OCI-LY7 (cell line): ENCODE measurements at regions of chr21 and their contacts with region 1.

Region 1: DNA sequence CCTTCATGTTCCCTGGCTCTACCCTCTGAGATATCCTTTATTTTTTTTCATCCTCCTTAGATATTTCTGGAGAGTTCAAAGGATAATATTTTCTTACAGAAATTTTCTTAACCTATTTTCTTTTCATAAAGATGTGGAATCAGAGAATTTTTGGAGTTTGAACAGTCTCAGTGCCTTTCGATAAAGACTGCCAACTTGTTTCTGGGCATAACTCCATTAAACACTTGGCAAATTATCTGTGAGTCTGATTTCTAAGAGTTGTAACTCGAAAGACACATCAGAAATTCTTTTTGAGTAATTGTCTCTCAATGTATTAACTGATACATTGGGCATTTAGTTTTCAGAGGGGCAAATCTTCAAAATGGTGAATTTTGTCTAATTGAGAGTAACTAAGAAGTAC is 1255.6 kb downstream of the NCAM2 start:
- DNase-seq: no peak
- H3K4me3 ChIP-seq: no peak overlapping the region
- H3K27ac ChIP-seq: no peak overlapping the region
- H3K4me1 ChIP-seq: no peaks in the 10 kb centered on the region
- CTCF ChIP-seq: no peak

Region 2: DNA sequence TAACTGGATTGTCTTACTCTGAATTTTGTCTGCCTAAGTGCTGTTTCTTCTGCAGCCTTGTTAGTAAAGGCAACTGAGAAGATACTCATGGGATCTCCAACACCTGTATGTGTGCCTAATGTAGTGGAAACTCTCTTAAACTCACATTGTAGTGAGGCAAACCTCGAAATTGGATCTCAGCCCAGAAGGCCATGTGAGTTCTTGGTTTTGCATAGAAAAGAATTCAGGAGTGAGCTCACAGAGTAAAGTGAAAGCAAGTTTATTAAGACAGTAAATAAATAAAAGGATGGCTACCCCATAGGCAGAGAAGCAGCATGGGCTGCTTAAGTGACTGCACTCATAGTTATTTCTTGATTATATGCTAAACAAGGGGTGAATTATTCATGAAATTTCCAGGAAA is 89.1 kb after region 1 on chr21:
- CTCF ChIA-PET with region 1: no interaction called
- POLR2A ChIA-PET with region 1: interaction called, 11 read pairs
- intact Hi-C with region 1: no loop called
- DNase-seq: no peak
- H3K4me3 ChIP-seq: no peak overlapping the region
- H3K27ac ChIP-seq: no peak overlapping the region
- H3K4me1 ChIP-seq: no peaks in the 10 kb centered on the region
- CTCF ChIP-seq: no peak

Region 3: DNA sequence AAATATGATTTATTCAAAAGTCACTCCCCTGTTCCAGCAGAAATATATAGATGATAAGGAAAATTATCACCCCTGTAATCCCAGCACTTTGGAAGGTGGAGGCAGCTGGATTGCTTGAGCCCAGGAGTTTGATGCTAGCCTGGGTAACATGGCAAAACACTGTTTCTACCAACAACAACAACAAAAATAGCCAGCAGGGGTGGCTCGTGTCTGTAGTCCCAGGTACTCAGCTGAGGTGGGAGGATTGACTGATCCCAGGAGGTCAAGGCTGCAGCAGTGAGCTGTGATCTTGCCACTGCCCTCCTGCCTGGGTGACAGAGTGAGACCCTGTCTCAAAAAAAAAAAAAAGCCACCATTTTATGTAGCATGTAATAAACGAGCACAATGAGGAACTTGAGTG is 291.0 kb after region 1 on chr21:
- CTCF ChIA-PET with region 1: no interaction called
- POLR2A ChIA-PET with region 1: no interaction called
- intact Hi-C with region 1: no loop called
- DNase-seq: no peak
- H3K4me3 ChIP-seq: no peak overlapping the region
- H3K27ac ChIP-seq: no peak overlapping the region
- H3K4me1 ChIP-seq: no peaks in the 10 kb centered on the region
- CTCF ChIP-seq: no peak